B cell (primary cell): ENCODE measurements at regions of chr10 and their contacts with region 1.

Region 1: DNA sequence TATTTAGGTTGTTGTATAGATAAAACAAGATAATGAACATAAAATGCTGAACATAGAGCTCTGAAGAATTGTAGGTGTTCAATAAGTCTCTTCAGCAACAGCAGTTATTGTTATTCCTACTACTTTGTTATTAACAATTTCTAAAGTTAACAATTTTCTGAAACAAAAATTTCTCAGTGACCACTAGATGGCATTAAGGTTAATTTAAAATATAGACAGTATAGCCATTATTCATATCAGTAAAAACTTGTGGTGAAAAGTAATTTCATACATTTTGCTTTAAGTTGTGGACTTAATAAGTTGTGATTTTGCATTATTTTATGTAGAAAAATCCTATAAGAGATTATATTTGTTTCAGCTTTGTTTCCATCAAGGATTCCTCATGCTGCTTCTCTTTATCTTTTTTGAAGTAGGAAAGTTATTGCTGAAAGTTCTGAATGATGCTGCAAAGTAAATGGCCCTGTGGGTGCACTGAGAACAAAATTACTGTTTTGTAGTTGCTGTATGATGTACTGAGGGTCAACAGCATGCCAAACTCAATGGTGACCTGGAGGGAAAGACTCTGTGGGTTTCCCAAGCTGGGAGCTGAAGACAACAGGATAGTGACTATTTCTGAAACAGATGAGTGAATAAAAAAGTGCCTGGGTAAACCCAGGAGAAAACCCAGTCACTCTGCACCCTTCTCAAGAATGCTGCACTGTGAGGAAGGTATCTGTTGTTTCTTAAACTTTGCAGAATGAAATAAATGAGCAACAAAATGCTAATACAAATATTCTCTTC is 253.6 kb downstream of the KIF20B start:
- DNase-seq: peak; percentile 21
- ATAC-seq: no peak
- H3K4me3 ChIP-seq: no peak overlapping the region
- H3K4me3 Mint-ChIP-seq: no peak overlapping the region
- H3K27ac ChIP-seq: no peak overlapping the region
- H3K27ac Mint-ChIP-seq: no peak overlapping the region
- H3K4me1 ChIP-seq: peaks cover 0 to 8% of the 10 kb centered on the region in 2 donors
- H3K4me1 Mint-ChIP-seq: peaks cover 12% of the 10 kb centered on the region
- H3K27me3 ChIP-seq: no peaks in the 10 kb centered on the region
- H3K27me3 Mint-ChIP-seq: no peaks in the 10 kb centered on the region
- CTCF ChIP-seq: peak; percentile 68

Region 2: GRCh38 chr10:89574368-89574767 is 380.6 kb before region 1 on chr10:
- CTCF ChIA-PET with region 1: no interaction called
- POLR2A ChIA-PET with region 1: no interaction called
- intact Hi-C with region 1: no loop called
- DNase-seq: no peak
- ATAC-seq: no peak
- H3K4me3 ChIP-seq: no peak overlapping the region
- H3K4me3 Mint-ChIP-seq: no peak overlapping the region
- H3K27ac ChIP-seq: no peak overlapping the region
- H3K27ac Mint-ChIP-seq: no peak overlapping the region
- H3K4me1 ChIP-seq: no peaks in the 10 kb centered on the region
- H3K4me1 Mint-ChIP-seq: no peaks in the 10 kb centered on the region
- H3K27me3 ChIP-seq: no peaks in the 10 kb centered on the region
- H3K27me3 Mint-ChIP-seq: no peaks in the 10 kb centered on the region
- CTCF ChIP-seq: no peak

Region 3: GRCh38 chr10:90138844-90139243 is 183.9 kb after region 1 on chr10:
- CTCF ChIA-PET with region 1: no interaction called
- POLR2A ChIA-PET with region 1: no interaction called
- intact Hi-C with region 1: loop called (anchors 2 kb)
- DNase-seq: peak; percentile 40
- ATAC-seq: no peak
- H3K4me3 ChIP-seq: no peak overlapping the region
- H3K4me3 Mint-ChIP-seq: no peak overlapping the region
- H3K27ac ChIP-seq: no peak overlapping the region
- H3K27ac Mint-ChIP-seq: no peak overlapping the region
- H3K4me1 ChIP-seq: no peaks in the 10 kb centered on the region
- H3K4me1 Mint-ChIP-seq: no peaks in the 10 kb centered on the region
- H3K27me3 ChIP-seq: no peaks in the 10 kb centered on the region
- H3K27me3 Mint-ChIP-seq: no peaks in the 10 kb centered on the region
- CTCF ChIP-seq: peak; percentile 45

Region 4: GRCh38 chr10:90592638-90593302 is 637.8 kb after region 1 on chr10:
- CTCF ChIA-PET with region 1: interaction called, 4 read pairs
- POLR2A ChIA-PET with region 1: no interaction called
- intact Hi-C with region 1: loop called (anchors 10 kb)
- DNase-seq: peak; percentile 37
- ATAC-seq: peak; percentile 39
- H3K4me3 ChIP-seq: no peak overlapping the region
- H3K4me3 Mint-ChIP-seq: no peak overlapping the region
- H3K27ac ChIP-seq: no peak overlapping the region
- H3K27ac Mint-ChIP-seq: no peak overlapping the region
- H3K4me1 ChIP-seq: peaks cover 0 to 2% of the 10 kb centered on the region in 2 donors
- H3K4me1 Mint-ChIP-seq: no peaks in the 10 kb centered on the region
- H3K27me3 ChIP-seq: no peaks in the 10 kb centered on the region
- H3K27me3 Mint-ChIP-seq: peaks cover 15% of the 10 kb centered on the region
- CTCF ChIP-seq: no peak

Region 5: GRCh38 chr10:90862908-90863514 is 908.0 kb after region 1 on chr10:
- CTCF ChIA-PET with region 1: no interaction called
- POLR2A ChIA-PET with region 1: no interaction called
- intact Hi-C with region 1: loop called (anchors 10 kb)
- DNase-seq: peak; percentile 36
- ATAC-seq: no peak
- H3K4me3 ChIP-seq: no peak overlapping the region
- H3K4me3 Mint-ChIP-seq: no peak overlapping the region
- H3K27ac ChIP-seq: no peak overlapping the region
- H3K27ac Mint-ChIP-seq: no peak overlapping the region
- H3K4me1 ChIP-seq: peaks cover 4 to 5% of the 10 kb centered on the region in 2 donors
- H3K4me1 Mint-ChIP-seq: peaks cover 4% of the 10 kb centered on the region
- H3K27me3 ChIP-seq: peaks cover 0 to 17% (median 10%) of the 10 kb centered on the region in 4 experiments
- H3K27me3 Mint-ChIP-seq: peaks cover 35% of the 10 kb centered on the region
- CTCF ChIP-seq: peak; percentile 86